ENCODE measurements at regions of chr5 and their contacts with region 1.

Region 1: GRCh38 chr5:134465816-134466240 is 54.1 kb upstream of the CDKN2AIPNL start:
- DNase-seq: peak in 6 of 9 donors; percentile 16 to 73 (median 20)
- ATAC-seq: peak; percentile 71
- H3K4me3 ChIP-seq: peak overlapping the region; percentile 71
- H3K4me3 Mint-ChIP-seq: peak overlapping the region; percentile 75 to 93 (median 86)
- H3K27ac ChIP-seq: peak overlapping the region; percentile 66
- H3K27ac Mint-ChIP-seq: peak overlapping the region in 8 of 9 donors; percentile 66 to 93 (median 86)
- H3K4me1 ChIP-seq: peaks cover 8 to 16% of the 10 kb centered on the region in 2 donors
- H3K4me1 Mint-ChIP-seq: peaks cover 7 to 25% (median 18%) of the 10 kb centered on the region in 7 donors
- H3K27me3 ChIP-seq: no peaks in the 10 kb centered on the region
- H3K27me3 Mint-ChIP-seq: no peaks in the 10 kb centered on the region

Region 2: GRCh38 chr5:134312796-134313195 is 153.0 kb before region 1 on chr5:
- CTCF ChIA-PET with region 1: no interaction called
- POLR2A ChIA-PET with region 1: no interaction called
- intact Hi-C with region 1: no loop called
- DNase-seq: no peak
- ATAC-seq: no peak
- H3K4me3 ChIP-seq: no peak overlapping the region
- H3K4me3 Mint-ChIP-seq: no peak overlapping the region
- H3K27ac ChIP-seq: no peak overlapping the region
- H3K27ac Mint-ChIP-seq: no peak overlapping the region
- H3K4me1 ChIP-seq: no peaks in the 10 kb centered on the region
- H3K4me1 Mint-ChIP-seq: peaks cover 0 to 5% (median 0%) of the 10 kb centered on the region in 7 donors
- H3K27me3 ChIP-seq: no peaks in the 10 kb centered on the region
- H3K27me3 Mint-ChIP-seq: peaks cover 0 to 3% (median 0%) of the 10 kb centered on the region in 5 donors

Region 3: DNA sequence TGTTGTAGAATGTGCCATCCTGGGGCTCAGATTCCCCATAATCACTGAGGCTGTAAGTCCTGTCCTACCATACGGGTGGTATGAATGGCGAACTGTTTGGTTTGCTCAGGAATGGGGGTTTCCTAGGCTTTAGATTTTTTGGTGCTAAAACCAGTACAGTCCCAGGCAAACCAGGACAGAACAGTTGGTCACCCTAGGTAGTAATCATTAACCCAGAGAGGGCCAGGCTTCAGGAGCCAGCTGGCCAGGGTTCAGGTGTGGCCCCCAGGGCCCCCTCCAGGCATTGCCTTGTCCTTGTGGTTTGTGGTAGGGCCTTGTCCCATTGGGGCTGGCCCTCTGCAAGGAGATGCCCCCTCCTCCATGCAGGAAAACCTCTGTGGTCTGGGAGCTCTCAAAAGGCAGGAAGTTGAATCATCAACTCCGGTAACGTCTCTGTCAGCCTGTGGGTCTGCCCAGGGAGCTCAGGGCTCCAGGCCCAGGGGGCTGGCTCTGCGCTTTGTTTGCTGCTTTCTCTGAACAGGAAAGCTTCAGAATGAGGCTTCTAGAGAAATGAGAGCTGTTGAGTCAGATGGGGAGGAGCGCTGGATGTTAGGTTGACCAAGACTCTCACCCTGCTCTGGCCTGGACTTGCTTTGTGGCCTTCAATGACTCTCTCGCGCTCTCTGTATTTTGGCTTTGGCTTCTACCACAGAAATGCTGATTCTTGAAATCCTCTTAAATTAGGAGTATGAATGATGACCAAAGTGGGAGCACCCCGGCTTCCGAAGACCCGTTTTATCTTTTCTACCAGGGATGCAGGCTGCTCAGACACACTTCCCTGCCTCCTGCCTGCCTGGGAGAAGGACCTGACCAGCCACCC is 37.5 kb after region 1 on chr5:
- CTCF ChIA-PET with region 1: no interaction called
- POLR2A ChIA-PET with region 1: interaction called, 5 read pairs
- intact Hi-C with region 1: loop called in 1 of 2 experiments (anchors 5 kb)
- DNase-seq: peak in 7 of 9 donors; percentile 15 to 73 (median 30)
- ATAC-seq: peak; percentile 77
- H3K4me3 ChIP-seq: no peak overlapping the region
- H3K4me3 Mint-ChIP-seq: peak overlapping the region in 9 of 10 donors; percentile 19 to 79 (median 48)
- H3K27ac ChIP-seq: peak overlapping the region; percentile 44
- H3K27ac Mint-ChIP-seq: peak overlapping the region; percentile 55 to 98 (median 86)
- H3K4me1 ChIP-seq: peaks cover 16 to 21% of the 10 kb centered on the region in 2 donors
- H3K4me1 Mint-ChIP-seq: peaks cover 11 to 43% (median 14%) of the 10 kb centered on the region in 7 donors
- H3K27me3 ChIP-seq: no peaks in the 10 kb centered on the region
- H3K27me3 Mint-ChIP-seq: no peaks in the 10 kb centered on the region

Region 4: GRCh38 chr5:134813407-134813806 is 347.6 kb after region 1 on chr5:
- CTCF ChIA-PET with region 1: no interaction called
- POLR2A ChIA-PET with region 1: no interaction called
- intact Hi-C with region 1: no loop called
- DNase-seq: peak in 1 of 9 donors; percentile 28
- ATAC-seq: peak; percentile 65
- H3K4me3 ChIP-seq: no peak overlapping the region
- H3K4me3 Mint-ChIP-seq: peak overlapping the region in 1 of 10 donors; percentile 3
- H3K27ac ChIP-seq: no peak overlapping the region
- H3K27ac Mint-ChIP-seq: peak overlapping the region in 5 of 9 donors; percentile 38 to 66 (median 55)
- H3K4me1 ChIP-seq: no peaks in the 10 kb centered on the region
- H3K4me1 Mint-ChIP-seq: peaks cover 0 to 16% (median 0%) of the 10 kb centered on the region in 7 donors
- H3K27me3 ChIP-seq: no peaks in the 10 kb centered on the region
- H3K27me3 Mint-ChIP-seq: no peaks in the 10 kb centered on the region